SK-N-SH (cell line): ENCODE measurements at regions of chr3 and their contacts with region 1.

Region 1: GRCh38 chr3:57227204-57227929 is at the start of gene APPL1:
- DNase-seq: peak; percentile 100
- H3K4me3 ChIP-seq: peak within 1 kb of the TSS; percentile 82 to 83
- H3K27ac ChIP-seq: peak within 1 kb of the TSS; percentile 74 to 92
- H3K4me1 ChIP-seq: peaks cover 0 to 12% of the 10 kb centered on the region in 2 experiments; a peak in 2 of 4 replicates
- H3K27me3 ChIP-seq: no peaks in the 10 kb centered on the region
- CTCF ChIP-seq: no peak
- EP300 ChIP-seq: no peak
- RAD21 ChIP-seq: no peak
- polyA plus RNA-seq, gene APPL1: 6.9 and 9.9 TPM in 2 replicates

Region 2: GRCh38 chr3:57026918-57027317 is 200.4 kb before region 1 on chr3:
- CTCF ChIA-PET with region 1: no interaction called
- POLR2A ChIA-PET with region 1: no interaction called
- DNase-seq: no peak
- H3K4me3 ChIP-seq: no peak overlapping the region
- H3K27ac ChIP-seq: no peak overlapping the region
- H3K4me1 ChIP-seq: peaks cover 0 to 13% of the 10 kb centered on the region in 2 experiments; a peak in 2 of 4 replicates
- H3K27me3 ChIP-seq: no peaks in the 10 kb centered on the region
- CTCF ChIP-seq: no peak
- EP300 ChIP-seq: no peak
- RAD21 ChIP-seq: no peak

Region 3: GRCh38 chr3:57199895-57200297 is 27.5 kb before region 1 on chr3 and contains the start of gene HESX1:
- CTCF ChIA-PET with region 1: interaction called, 11 read pairs
- POLR2A ChIA-PET with region 1: interaction called, 3 read pairs
- DNase-seq: no peak
- H3K4me3 ChIP-seq: no peak within 1 kb of the TSS
- H3K27ac ChIP-seq: no peak within 1 kb of the TSS
- H3K4me1 ChIP-seq: no peaks in the 10 kb centered on the region
- H3K27me3 ChIP-seq: no peaks in the 10 kb centered on the region
- CTCF ChIP-seq: no peak
- EP300 ChIP-seq: no peak
- RAD21 ChIP-seq: no peak
- polyA plus RNA-seq, gene HESX1: 1.2 and 2.5 TPM in 2 replicates